Natural killer cell (primary cell): ENCODE measurements at regions of chr5 and their contacts with region 1.

Region 1: GRCh38 chr5:115625579-115626444 is at the start of gene TMED7:
- DNase-seq: peak; percentile 96 to 99
- ATAC-seq: peak; percentile 89 to 97 (median 90)
- H3K4me3 ChIP-seq: peak within 1 kb of the TSS; percentile 83
- H3K4me3 Mint-ChIP-seq: no peak within 1 kb of the TSS
- H3K27ac ChIP-seq: peak within 1 kb of the TSS; percentile 94
- H3K27ac Mint-ChIP-seq: no peak within 1 kb of the TSS
- H3K4me1 ChIP-seq: peaks cover 11% of the 10 kb centered on the region
- H3K4me1 Mint-ChIP-seq: peaks cover 24 to 31% of the 10 kb centered on the region in 2 donors
- H3K27me3 ChIP-seq: no peaks in the 10 kb centered on the region
- H3K27me3 Mint-ChIP-seq: peaks cover 0 to 2% of the 10 kb centered on the region in 2 donors
- CTCF ChIP-seq: no peak
- total RNA-seq, gene TMED7: 40.6 to 48.8 (median 48.1) TPM

Region 2: DNA sequence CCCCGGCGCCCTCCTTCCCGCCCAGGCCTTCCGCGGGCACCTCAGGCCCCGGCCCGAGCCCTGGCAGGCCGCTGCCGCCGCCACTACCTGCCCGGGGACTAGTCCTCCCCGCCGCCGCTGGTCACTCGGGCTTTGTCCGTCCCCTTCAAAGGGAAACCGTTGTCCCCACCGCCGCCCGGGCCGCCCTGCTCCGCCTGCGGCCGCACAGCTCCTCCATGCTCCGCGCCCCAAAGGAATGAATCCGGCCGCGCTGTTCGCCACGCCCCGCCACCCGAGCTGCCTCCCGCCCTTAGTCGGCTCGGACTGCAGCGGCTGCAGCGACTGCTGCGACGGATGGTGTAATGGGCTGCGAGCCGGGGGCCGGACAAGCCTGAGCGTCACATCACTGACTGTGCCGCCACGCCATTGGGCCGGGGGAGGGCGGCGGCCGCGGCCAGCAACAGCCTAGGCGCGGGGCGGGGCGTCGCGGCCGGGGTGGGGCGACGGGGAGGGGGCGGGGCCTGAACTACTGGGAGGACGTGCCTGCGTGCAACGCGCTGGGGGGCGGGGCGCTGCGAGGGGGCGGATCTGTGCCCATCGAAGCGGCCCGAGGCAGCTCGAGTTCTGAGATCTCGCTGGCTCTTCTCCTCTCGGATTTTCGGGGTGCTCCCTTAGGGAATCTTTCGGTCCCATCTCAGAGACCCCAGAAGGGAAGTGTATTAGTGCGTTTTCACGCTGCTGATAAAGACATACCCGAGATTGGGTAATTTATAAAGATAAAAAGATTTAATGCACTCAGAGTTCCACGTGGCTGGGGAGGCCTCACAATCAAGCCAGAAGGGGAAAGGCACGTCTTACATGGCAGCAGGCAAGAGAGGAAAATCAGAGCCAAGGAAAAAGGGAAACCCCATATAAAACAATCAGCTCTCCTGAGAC is 81.1 kb before region 1 on chr5 and contains the start of gene FEM1C:
- intact Hi-C with region 1: loop called (anchors 2 kb)
- DNase-seq: peak; percentile 95
- ATAC-seq: peak; percentile 89 to 96 (median 92)
- H3K4me3 ChIP-seq: peak within 1 kb of the TSS; percentile 58
- H3K4me3 Mint-ChIP-seq: peak within 1 kb of the TSS; percentile 98
- H3K27ac ChIP-seq: peak within 1 kb of the TSS; percentile 98
- H3K27ac Mint-ChIP-seq: peak within 1 kb of the TSS; percentile 93 to 98
- H3K4me1 ChIP-seq: peaks cover 13% of the 10 kb centered on the region
- H3K4me1 Mint-ChIP-seq: peaks cover 48 to 54% of the 10 kb centered on the region in 2 donors
- H3K27me3 ChIP-seq: no peaks in the 10 kb centered on the region
- H3K27me3 Mint-ChIP-seq: no peaks in the 10 kb centered on the region
- CTCF ChIP-seq: no peak
- total RNA-seq, gene FEM1C: 33.8 to 48.6 (median 36.2) TPM

Region 3: DNA sequence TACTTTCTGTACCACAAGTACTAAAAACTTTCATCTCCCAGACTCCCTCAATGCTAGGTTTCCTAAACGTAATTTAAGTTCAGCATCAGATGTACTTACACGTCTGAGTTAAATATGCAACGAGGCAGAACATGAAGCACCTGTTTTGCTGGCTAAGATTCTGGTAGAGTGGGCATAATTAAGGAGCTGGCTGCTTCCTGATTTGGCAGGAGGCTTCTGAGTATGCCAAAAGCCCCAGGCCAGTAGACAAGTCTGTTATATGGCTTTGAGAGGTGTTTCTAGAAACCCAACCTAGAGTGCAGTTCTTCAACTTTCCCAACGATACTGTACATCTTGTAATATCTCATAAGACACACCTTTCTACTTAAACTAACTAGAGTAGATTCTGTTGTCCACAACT is 37.2 kb before region 1 on chr5:
- intact Hi-C with region 1: no loop called
- DNase-seq: no peak
- ATAC-seq: no peak
- H3K4me3 ChIP-seq: no peak overlapping the region
- H3K4me3 Mint-ChIP-seq: no peak overlapping the region
- H3K27ac ChIP-seq: no peak overlapping the region
- H3K27ac Mint-ChIP-seq: no peak overlapping the region
- H3K4me1 ChIP-seq: no peaks in the 10 kb centered on the region
- H3K4me1 Mint-ChIP-seq: no peaks in the 10 kb centered on the region
- H3K27me3 ChIP-seq: no peaks in the 10 kb centered on the region
- H3K27me3 Mint-ChIP-seq: no peaks in the 10 kb centered on the region
- CTCF ChIP-seq: no peak

Region 4: DNA sequence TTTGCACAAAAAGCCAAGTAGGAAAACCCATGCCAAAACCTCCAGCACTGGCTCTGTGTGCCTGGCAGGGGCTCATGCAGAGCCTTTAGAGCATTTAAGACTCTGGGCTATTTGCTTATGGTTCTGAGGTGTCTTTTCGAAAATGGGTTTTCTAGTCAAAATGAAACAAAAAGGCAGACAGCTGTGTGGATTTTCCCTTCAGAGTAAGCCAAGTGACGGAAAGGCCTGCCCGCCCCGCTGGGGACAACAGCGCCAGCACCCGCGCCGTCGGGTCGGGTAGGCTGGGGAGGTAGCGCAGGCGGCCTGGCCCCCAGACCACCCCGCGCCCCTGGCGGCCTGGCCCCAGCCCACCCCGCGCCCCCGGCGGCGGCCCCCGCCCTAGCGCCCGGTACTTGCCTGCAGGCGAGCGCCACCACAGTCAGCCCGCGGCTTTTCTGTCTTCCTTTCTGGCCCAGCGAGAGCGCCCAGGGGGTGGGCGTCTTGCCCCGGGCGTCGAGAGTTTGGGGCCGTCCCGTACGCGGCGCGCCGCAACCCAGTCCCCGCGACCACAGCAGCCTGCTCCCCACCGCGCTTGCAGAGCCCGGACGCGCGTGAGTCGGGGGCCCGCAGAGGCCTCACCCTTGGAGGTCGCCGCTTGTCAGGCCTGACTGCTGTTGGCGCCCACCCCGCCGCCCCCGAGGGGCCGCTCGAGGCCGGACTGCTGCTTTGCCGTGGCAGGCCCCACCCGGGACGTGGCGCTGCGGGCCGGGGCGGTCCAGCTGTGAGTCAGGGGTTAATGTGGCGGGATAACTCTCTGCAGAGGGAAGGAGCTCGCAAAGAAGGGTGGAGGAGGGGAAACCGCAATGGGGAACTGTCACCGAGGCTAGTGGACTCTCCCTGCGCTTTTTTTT is 23.9 kb before region 1 on chr5 and contains the start of gene TICAM2:
- intact Hi-C with region 1: loop called (anchors 2 kb)
- DNase-seq: peak; percentile 54 to 75
- ATAC-seq: peak; percentile 85 to 89 (median 87)
- H3K4me3 ChIP-seq: peak within 1 kb of the TSS; percentile 53
- H3K4me3 Mint-ChIP-seq: peak within 1 kb of the TSS; percentile 88
- H3K27ac ChIP-seq: peak within 1 kb of the TSS; percentile 62
- H3K27ac Mint-ChIP-seq: peak within 1 kb of the TSS; percentile 83 to 84
- H3K4me1 ChIP-seq: peaks cover 9% of the 10 kb centered on the region
- H3K4me1 Mint-ChIP-seq: peaks cover 17 to 39% of the 10 kb centered on the region in 2 donors
- H3K27me3 ChIP-seq: no peaks in the 10 kb centered on the region
- H3K27me3 Mint-ChIP-seq: no peaks in the 10 kb centered on the region
- CTCF ChIP-seq: peak; percentile 31
- total RNA-seq, gene TICAM2: 0.61 to 1.4 (median 1.3) TPM

Region 5: DNA sequence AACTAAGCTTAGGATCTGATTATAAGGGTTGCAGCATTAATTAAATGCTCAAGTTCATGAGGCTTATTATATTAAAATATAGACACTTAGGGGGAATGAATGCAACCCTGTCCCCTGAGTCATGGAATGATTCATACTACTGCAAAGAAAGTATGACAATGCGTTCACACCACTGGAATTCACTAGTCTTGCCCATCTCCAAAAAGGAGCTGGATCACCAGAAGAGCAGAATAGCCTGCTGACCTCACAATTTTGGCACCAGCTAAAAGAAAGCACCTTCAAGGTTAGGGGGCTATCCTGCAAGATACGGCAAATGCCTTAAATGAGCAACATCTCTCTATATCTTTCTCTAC is 32.0 kb after region 1 on chr5:
- intact Hi-C with region 1: no loop called
- DNase-seq: no peak
- ATAC-seq: no peak
- H3K4me3 ChIP-seq: no peak overlapping the region
- H3K4me3 Mint-ChIP-seq: no peak overlapping the region
- H3K27ac ChIP-seq: no peak overlapping the region
- H3K27ac Mint-ChIP-seq: no peak overlapping the region
- H3K4me1 ChIP-seq: no peaks in the 10 kb centered on the region
- H3K4me1 Mint-ChIP-seq: no peaks in the 10 kb centered on the region
- H3K27me3 ChIP-seq: peaks cover 3% of the 10 kb centered on the region
- H3K27me3 Mint-ChIP-seq: peaks cover 14 to 40% of the 10 kb centered on the region in 2 donors
- CTCF ChIP-seq: no peak